A673 (cell line): ENCODE measurements at regions of chr13 and their contacts with region 1.

Region 1: GRCh38 chr13:110412132-110412914 is 105.2 kb downstream of the COL4A2 start:
- DNase-seq: peak; percentile 96
- H3K4me3 ChIP-seq: no peak overlapping the region
- H3K27ac ChIP-seq: peak overlapping the region; percentile 17
- H3K4me1 ChIP-seq: peaks cover 30% of the 10 kb centered on the region
- H3K27me3 ChIP-seq: no peaks in the 10 kb centered on the region
- CTCF ChIP-seq: peak; percentile 96

Region 2: DNA sequence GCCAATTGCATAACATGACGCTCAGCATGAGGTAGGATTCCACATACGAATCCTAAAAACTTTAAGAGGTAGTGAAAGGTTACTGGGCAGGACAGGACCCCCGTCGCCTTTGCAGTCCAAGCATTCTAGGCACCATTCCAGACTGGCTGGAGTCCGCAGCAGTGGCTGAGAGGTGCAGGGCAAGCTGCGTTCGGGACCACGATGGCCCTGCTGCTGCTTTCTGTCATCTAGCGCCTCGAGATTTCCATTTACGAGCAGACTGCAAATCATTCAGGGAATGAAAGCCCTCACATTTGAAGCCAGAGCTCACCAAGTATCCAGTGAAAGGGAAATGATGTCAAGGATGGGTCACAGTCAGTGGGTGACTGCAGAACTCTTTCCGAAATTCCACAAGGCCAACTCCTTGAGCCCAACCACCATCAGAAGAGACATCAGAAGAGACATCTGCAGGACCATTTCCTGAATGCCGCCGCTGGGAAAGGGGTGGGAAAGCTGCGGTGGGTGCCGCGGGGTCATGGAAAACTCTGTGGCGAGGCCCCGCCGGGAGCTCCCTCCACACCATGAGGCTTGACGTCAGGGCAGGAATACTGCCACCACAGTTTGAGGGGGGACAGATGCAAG is 193.6 kb before region 1 on chr13:
- CTCF ChIA-PET with region 1: interaction called, 4 read pairs
- POLR2A ChIA-PET with region 1: no interaction called
- intact Hi-C with region 1: loop called (anchors 1 kb)
- DNase-seq: peak; percentile 10
- H3K4me3 ChIP-seq: no peak overlapping the region
- H3K27ac ChIP-seq: peak overlapping the region; percentile 31
- H3K4me1 ChIP-seq: peaks cover 28% of the 10 kb centered on the region
- H3K27me3 ChIP-seq: no peaks in the 10 kb centered on the region
- CTCF ChIP-seq: no peak

Region 3: DNA sequence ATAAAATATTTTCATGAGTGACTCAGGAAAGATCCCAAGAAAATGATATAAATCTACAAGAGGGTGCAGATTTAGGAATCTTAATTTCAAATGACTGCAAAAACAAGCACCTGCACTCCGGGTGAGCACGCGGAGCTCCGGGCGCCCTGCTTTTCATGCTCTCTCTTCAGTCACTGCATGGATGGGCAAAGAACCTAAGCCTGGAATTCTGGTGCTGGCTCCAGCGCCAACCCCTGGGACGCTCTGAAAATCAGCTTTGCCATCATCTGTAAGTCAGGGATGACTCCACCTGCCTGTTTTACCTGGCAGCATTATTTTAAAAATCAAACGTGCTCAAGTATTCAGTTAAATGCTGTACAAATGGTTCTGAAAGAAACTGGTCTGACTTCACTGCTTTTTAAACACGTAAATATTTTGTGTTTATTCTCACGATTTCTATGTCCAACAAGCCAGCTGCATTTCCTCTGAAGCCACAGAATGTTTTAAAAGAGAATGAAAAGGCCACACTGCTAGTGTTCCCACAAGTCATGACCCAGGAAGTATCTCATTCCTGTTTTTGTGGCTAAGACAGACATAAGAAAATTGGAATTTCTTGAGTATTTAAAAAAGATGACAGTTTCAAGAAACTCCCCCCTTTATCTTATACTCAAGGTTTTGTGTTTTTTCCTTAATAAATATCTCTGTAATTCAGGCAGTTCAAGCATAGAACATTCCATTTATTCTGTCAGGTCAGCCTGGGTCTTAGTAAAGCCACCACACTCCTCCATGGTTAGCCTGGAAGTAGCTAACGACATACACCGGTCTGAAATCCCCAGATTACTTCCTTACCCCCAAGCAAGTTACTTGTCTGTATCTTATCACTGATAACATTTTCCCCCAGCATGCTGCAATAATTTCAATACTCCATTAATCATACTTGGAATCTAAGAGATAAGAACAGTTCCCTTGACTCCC is 186.4 kb before region 1 on chr13:
- CTCF ChIA-PET with region 1: interaction called, 4 read pairs
- POLR2A ChIA-PET with region 1: no interaction called
- intact Hi-C with region 1: loop called (anchors 1 kb)
- DNase-seq: no peak
- H3K4me3 ChIP-seq: no peak overlapping the region
- H3K27ac ChIP-seq: no peak overlapping the region
- H3K4me1 ChIP-seq: peaks cover 30% of the 10 kb centered on the region
- H3K27me3 ChIP-seq: no peaks in the 10 kb centered on the region
- CTCF ChIP-seq: no peak

Region 4: GRCh38 chr13:110248449-110249143 is 163.7 kb before region 1 on chr13:
- CTCF ChIA-PET with region 1: interaction called, 6 read pairs
- POLR2A ChIA-PET with region 1: no interaction called
- intact Hi-C with region 1: loop called (anchors 1 kb)
- DNase-seq: no peak
- H3K4me3 ChIP-seq: no peak overlapping the region
- H3K27ac ChIP-seq: peak overlapping the region; percentile 81
- H3K4me1 ChIP-seq: peaks cover 22% of the 10 kb centered on the region
- H3K27me3 ChIP-seq: no peaks in the 10 kb centered on the region
- CTCF ChIP-seq: no peak

Region 5: DNA sequence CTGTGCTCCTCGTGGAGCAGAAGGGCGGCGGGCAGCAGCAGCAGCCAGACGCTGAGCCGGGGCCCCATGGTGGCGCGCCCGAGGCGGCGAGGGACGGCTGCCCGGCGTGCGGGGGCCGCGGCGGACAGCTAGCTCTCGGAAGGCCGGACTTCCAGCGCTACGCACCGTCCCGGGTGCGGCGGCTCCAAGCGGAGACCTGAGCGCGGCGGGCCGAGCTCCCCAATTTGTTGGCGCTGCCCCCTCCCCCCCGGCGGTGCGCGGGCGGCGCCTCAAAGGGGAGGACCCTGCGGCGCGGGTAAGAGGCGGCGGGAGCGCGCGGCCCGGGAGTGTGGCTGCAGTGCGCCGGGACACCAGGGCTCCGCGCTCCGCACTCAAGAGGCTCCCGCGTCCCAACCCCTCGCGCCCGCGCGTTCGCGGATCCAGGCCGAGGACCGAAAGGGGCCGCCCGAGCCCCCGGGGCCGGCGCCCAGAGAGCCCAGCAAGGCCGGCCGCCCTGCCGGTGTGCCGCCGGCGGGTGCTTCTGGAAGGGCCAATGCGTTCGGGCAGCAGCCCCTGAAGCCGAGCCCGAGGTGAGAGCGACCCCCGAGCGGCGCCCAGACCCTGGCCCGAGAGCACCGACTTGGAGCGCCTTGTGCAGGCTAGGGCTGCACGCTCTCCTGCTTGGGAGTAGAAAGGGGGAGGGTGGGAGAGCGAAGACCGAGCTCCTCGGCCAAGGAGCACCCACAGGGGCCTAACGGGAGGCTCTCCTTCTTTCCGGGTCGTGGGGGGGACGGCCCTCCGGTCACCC is 105.2 kb before region 1 on chr13 and contains the starts of genes COL4A1 and COL4A2:
- CTCF ChIA-PET with region 1: no interaction called
- POLR2A ChIA-PET with region 1: no interaction called
- intact Hi-C with region 1: loop called (anchors 2 kb)
- DNase-seq: peak; percentile 83
- H3K4me3 ChIP-seq: peak within 1 kb of the TSS; percentile 98
- H3K27ac ChIP-seq: peak within 1 kb of the TSS; percentile 91
- H3K4me1 ChIP-seq: peaks cover 42% of the 10 kb centered on the region
- H3K27me3 ChIP-seq: no peaks in the 10 kb centered on the region
- CTCF ChIP-seq: no peak
- total RNA-seq, gene COL4A1: 83.9 and 86.0 TPM in 2 replicates
- total RNA-seq, gene COL4A2: 184 and 193 TPM in 2 replicates

Region 6: DNA sequence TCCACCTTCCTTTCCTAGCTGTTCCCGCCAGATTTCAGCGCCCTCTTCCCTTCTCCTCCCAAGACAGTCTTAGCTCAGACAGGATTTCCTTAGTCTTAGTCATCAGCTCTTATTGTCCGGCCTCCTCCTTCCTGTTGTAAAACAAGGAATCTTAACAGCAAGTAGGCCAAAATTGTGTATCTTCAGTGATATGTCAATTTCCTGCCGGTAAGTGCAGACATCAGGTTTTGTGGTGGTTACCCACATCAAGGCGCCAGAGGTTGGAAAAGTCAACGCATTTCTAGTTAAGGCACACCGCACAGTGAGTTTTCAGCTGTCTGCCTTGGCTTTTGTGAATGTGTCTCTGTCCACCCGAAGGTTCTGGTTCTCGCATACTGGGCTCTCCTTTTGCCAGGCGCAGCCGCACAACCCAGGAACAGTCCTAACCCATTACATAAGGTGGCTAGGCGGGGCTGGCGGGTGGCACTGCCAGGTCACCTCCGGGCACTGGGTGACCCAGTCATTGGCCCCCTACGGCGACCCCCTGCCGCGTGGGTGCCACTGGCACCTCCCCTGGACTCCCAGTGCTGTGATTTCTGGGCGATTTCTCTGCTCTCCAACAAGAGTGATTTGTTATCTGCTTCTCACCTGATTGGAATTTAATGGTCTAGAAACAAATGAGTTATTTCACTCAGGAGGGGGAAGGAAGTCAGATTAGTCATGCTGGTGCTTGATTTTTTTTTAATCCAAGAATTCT is 92.4 kb before region 1 on chr13:
- CTCF ChIA-PET with region 1: no interaction called
- POLR2A ChIA-PET with region 1: no interaction called
- intact Hi-C with region 1: loop called (anchors 5 kb)
- DNase-seq: peak; percentile 85
- H3K4me3 ChIP-seq: peak overlapping the region; percentile 31
- H3K27ac ChIP-seq: peak overlapping the region; percentile 85
- H3K4me1 ChIP-seq: peaks cover 72% of the 10 kb centered on the region
- H3K27me3 ChIP-seq: no peaks in the 10 kb centered on the region
- CTCF ChIP-seq: no peak

Region 7: GRCh38 chr13:110525328-110526319 is 113.3 kb after region 1 on chr13:
- CTCF ChIA-PET with region 1: no interaction called
- POLR2A ChIA-PET with region 1: no interaction called
- intact Hi-C with region 1: no loop called
- DNase-seq: no peak
- H3K4me3 ChIP-seq: no peak overlapping the region
- H3K27ac ChIP-seq: no peak overlapping the region
- H3K4me1 ChIP-seq: no peaks in the 10 kb centered on the region
- H3K27me3 ChIP-seq: no peaks in the 10 kb centered on the region
- CTCF ChIP-seq: no peak